Heart right ventricle (tissue), 16 donors: ENCODE measurements at regions of chr14 and their contacts with region 1.

Region 1: GRCh38 chr14:81269100-81269978 is 48.6 kb upstream of the GTF2A1 start:
- DNase-seq: peak in 1 of 2 donors; percentile 48
- ATAC-seq: peak; percentile 55 to 83 (median 68)
- H3K4me3 ChIP-seq: no peak overlapping the region
- H3K27ac ChIP-seq: no peak overlapping the region
- H3K4me1 ChIP-seq: peaks cover 0 to 20% (median 0%) of the 10 kb centered on the region in 9 donors
- H3K27me3 ChIP-seq: peaks cover 0 to 12% (median 8%) of the 10 kb centered on the region in 7 donors
- CTCF ChIP-seq: peak; percentile 53 to 84 (median 77)

Region 2: GRCh38 chr14:81122326-81122725 is 147.0 kb before region 1 on chr14:
- intact Hi-C with region 1: no loop called
- DNase-seq: no peak
- ATAC-seq: no peak
- H3K4me3 ChIP-seq: no peak overlapping the region
- H3K27ac ChIP-seq: no peak overlapping the region
- H3K4me1 ChIP-seq: peaks cover 0 to 15% (median 0%) of the 10 kb centered on the region in 9 donors
- H3K27me3 ChIP-seq: no peaks in the 10 kb centered on the region
- CTCF ChIP-seq: no peak

Region 3: GRCh38 chr14:81231540-81231939 is 37.8 kb before region 1 on chr14:
- intact Hi-C with region 1: no loop called
- DNase-seq: no peak
- ATAC-seq: no peak
- H3K4me3 ChIP-seq: no peak overlapping the region
- H3K27ac ChIP-seq: no peak overlapping the region
- H3K4me1 ChIP-seq: no peaks in the 10 kb centered on the region
- H3K27me3 ChIP-seq: no peaks in the 10 kb centered on the region
- CTCF ChIP-seq: no peak

Region 4: GRCh38 chr14:81453166-81453766 is 183.9 kb after region 1 on chr14:
- intact Hi-C with region 1: loop called (anchors 1 to 5 kb)
- DNase-seq: peak in 1 of 2 donors; percentile 51
- ATAC-seq: peak in 2 of 8 donors; percentile 26 to 44
- H3K4me3 ChIP-seq: no peak overlapping the region
- H3K27ac ChIP-seq: peak overlapping the region in 1 of 10 donors; percentile 19
- H3K4me1 ChIP-seq: peaks cover 0 to 26% (median 16%) of the 10 kb centered on the region in 9 donors
- H3K27me3 ChIP-seq: peaks cover 0 to 24% (median 10%) of the 10 kb centered on the region in 7 donors
- CTCF ChIP-seq: peak; percentile 50 to 88 (median 83)

Region 5: GRCh38 chr14:81464247-81465002 is 195.1 kb after region 1 on chr14:
- intact Hi-C with region 1: loop called in 1 of 10 experiments (anchors 2 kb)
- DNase-seq: peak in 1 of 2 donors; percentile 63
- ATAC-seq: peak in 6 of 8 donors; percentile 43 to 54 (median 51)
- H3K4me3 ChIP-seq: peak overlapping the region in 9 of 10 donors; percentile 21 to 60 (median 51)
- H3K27ac ChIP-seq: peak overlapping the region in 4 of 10 donors; percentile 33 to 89 (median 46)
- H3K4me1 ChIP-seq: peaks cover 0 to 10% (median 0%) of the 10 kb centered on the region in 9 donors
- H3K27me3 ChIP-seq: no peaks in the 10 kb centered on the region
- CTCF ChIP-seq: peak; percentile 81 to 94 (median 89)